ENCODE measurements at regions of chr3 and their contacts with region 1.

Region 1: DNA sequence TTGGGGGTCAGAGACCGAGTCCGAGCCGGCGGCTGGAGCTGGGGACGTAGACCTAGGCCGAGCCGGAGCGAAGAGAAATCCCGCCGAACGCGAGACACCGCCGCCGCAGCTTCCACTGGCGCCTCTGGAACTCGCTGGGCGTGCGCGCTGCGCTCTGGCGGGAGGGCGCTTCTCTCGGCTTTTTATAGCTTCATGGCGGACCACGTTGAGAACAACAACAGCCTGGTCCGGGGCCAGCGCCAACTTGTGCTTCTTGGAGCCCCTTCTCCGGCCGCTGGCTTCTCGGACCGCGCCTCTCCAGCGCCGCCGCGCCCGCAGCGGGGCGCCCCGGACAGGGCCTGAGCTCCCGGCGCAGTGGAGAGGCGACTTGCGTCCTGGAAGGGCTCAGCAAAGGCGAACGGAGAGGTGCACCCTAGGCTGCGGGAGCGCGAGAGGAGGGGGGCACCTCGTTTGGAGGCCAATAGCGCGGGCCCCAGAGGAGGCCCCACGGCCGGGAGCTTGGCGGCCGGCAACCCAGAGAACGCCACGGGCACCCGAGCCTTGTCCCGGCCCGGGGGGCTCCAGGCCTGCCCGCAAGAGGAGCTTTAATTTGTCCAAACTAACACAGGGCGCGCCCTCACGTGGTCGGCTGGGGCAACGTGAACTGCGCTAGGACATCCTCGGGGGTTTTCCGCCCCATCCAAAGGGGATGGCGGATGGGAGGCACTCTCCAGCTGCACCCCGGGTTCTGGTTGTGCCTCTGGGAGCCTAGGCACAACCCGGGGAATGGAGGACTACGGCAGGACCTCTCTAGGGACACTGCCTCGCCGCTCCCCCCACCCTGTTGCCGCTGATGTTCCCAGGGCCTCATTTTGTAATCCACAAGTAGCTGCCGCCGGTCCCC is 37.7 kb downstream of the HMCES start:
- DNase-seq: peak; percentile 82 to 94 (median 91)
- ATAC-seq: peak; percentile 41
- H3K4me3 ChIP-seq: peak overlapping the region; percentile 92
- H3K4me3 Mint-ChIP-seq: peak overlapping the region; percentile 96
- H3K27ac ChIP-seq: peak overlapping the region; percentile 15 to 67
- H3K27ac Mint-ChIP-seq: peak overlapping the region; percentile 82
- H3K4me1 ChIP-seq: peaks cover 32% of the 10 kb centered on the region
- H3K4me1 Mint-ChIP-seq: peaks cover 28% of the 10 kb centered on the region
- H3K27me3 ChIP-seq: no peaks in the 10 kb centered on the region
- H3K27me3 Mint-ChIP-seq: no peaks in the 10 kb centered on the region
- CTCF ChIP-seq: peak; percentile 80

Region 2: DNA sequence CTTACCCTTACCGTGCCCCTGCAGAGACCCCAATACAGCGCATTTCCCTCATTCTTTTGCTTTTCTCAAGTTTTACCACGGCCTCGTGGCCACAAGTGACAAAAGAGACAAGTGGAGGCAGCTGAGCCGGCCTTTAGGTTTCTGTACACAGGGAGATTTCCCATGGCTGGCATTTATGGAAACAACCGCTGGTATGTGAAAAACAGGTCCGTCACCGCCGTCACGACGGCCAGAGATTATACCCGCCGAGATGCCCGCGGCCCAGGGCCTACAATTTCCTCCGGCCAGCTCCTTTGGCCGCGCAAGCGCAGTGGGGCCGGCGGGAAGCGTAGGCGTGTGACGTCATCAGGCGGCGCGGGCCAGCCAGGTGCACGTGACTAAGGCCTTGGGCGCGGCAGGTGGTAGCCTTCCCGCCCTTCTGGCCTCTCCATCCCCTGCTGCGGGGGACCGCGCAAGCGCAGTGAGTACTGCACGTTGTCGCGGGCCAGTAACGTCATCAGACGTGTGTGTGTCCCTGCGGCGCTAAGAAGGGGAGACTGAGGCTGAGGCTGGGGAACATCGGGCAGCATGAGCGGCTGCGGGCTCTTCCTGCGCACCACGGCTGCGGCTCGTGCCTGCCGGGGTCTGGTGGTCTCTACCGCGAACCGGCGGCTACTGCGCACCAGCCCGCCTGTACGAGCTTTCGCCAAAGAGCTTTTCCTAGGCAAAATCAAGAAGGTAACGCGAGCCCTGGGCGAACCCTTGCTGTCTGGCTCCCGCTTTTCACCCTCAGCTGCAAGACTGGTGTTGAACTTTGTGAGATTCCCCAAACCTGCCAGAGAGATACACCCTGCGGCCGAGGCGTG is 437.0 kb before region 1 on chr3 and contains the start of gene ACAD9:
- CTCF ChIA-PET with region 1: no interaction called
- POLR2A ChIA-PET with region 1: interaction called, 13 read pairs
- intact Hi-C with region 1: no loop called
- DNase-seq: peak; percentile 92 to 99 (median 96)
- ATAC-seq: peak; percentile 87
- H3K4me3 ChIP-seq: peak within 1 kb of the TSS; percentile 94
- H3K4me3 Mint-ChIP-seq: peak within 1 kb of the TSS; percentile 88
- H3K27ac ChIP-seq: peak within 1 kb of the TSS; percentile 91 to 99
- H3K27ac Mint-ChIP-seq: peak within 1 kb of the TSS; percentile 92
- H3K4me1 ChIP-seq: peaks cover 56% of the 10 kb centered on the region
- H3K4me1 Mint-ChIP-seq: peaks cover 74% of the 10 kb centered on the region
- H3K27me3 ChIP-seq: no peaks in the 10 kb centered on the region
- H3K27me3 Mint-ChIP-seq: no peaks in the 10 kb centered on the region
- CTCF ChIP-seq: no peak
- total RNA-seq, gene ACAD9: 64.8 to 71.6 TPM

Region 3: DNA sequence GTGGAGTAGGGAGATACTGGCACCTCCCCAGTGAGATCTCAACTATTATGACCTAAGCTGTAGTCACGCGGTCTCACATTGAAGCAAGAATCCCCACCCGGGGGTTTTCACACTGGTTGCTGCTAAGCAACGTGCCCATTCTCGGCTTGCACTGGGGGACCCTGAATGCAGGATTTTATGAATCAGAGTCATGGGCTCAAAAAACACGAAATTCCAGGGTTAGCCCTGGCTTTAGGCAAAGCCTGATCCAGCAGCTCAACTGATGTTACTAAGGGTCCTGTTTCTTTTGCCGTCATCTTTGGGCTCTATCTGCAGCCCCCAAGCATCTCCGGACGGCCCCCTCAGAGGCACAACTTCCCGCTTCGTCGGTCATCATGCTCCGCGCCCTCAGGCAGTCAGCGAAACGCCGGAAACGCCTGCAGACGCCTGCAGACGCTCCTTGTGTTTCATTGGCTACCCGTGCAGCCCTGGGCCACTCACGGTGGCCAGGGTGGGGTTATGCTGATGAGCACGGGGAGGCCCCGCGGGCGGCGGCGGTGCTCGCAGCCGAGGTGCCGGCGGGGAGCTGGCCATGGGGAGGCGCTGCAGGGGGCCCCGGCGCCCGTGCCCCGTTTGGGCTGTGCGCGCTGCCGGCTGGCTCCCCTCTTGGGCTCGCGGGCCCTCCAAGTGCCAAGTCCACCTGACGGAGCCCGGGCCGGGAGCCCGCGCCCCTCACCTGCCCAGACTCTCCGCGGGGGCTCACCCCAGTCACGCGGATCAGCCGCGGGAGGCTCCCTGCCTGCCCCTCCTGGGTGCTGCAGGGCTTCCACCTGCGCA is 289.4 kb before region 1 on chr3:
- CTCF ChIA-PET with region 1: interaction called, 4 read pairs
- POLR2A ChIA-PET with region 1: interaction called, 17 read pairs
- intact Hi-C with region 1: no loop called
- DNase-seq: peak; percentile 85 to 97 (median 90)
- ATAC-seq: peak; percentile 99
- H3K4me3 ChIP-seq: peak overlapping the region; percentile 54
- H3K4me3 Mint-ChIP-seq: peak overlapping the region; percentile 78
- H3K27ac ChIP-seq: peak overlapping the region; percentile 71 to 83
- H3K27ac Mint-ChIP-seq: peak overlapping the region; percentile 95
- H3K4me1 ChIP-seq: peaks cover 22% of the 10 kb centered on the region
- H3K4me1 Mint-ChIP-seq: peaks cover 18% of the 10 kb centered on the region
- H3K27me3 ChIP-seq: no peaks in the 10 kb centered on the region
- H3K27me3 Mint-ChIP-seq: no peaks in the 10 kb centered on the region
- CTCF ChIP-seq: peak; percentile 82

Region 4: GRCh38 chr3:129249276-129250065 is 66.9 kb before region 1 on chr3 and contains the start of gene COPG1:
- CTCF ChIA-PET with region 1: interaction called, 10 read pairs
- POLR2A ChIA-PET with region 1: interaction called, 21 read pairs
- intact Hi-C with region 1: loop called in 1 of 2 experiments (anchors 2 kb)
- DNase-seq: peak; percentile 72 to 94 (median 86)
- ATAC-seq: peak; percentile 85
- H3K4me3 ChIP-seq: peak within 1 kb of the TSS; percentile 100
- H3K4me3 Mint-ChIP-seq: peak within 1 kb of the TSS; percentile 98
- H3K27ac ChIP-seq: peak within 1 kb of the TSS; percentile 79 to 88
- H3K27ac Mint-ChIP-seq: peak within 1 kb of the TSS; percentile 97
- H3K4me1 ChIP-seq: peaks cover 47% of the 10 kb centered on the region
- H3K4me1 Mint-ChIP-seq: peaks cover 55% of the 10 kb centered on the region
- H3K27me3 ChIP-seq: no peaks in the 10 kb centered on the region
- H3K27me3 Mint-ChIP-seq: no peaks in the 10 kb centered on the region
- CTCF ChIP-seq: no peak
- total RNA-seq, gene COPG1: 77.7 to 79.3 TPM

Region 5: GRCh38 chr3:129278439-129278970 is 37.9 kb before region 1 on chr3 and contains the start of gene HMCES:
- CTCF ChIA-PET with region 1: interaction called, 21 read pairs
- POLR2A ChIA-PET with region 1: interaction called, 121 read pairs
- intact Hi-C with region 1: loop called (anchors 1 to 2 kb)
- DNase-seq: peak; percentile 91 to 98 (median 95)
- ATAC-seq: peak; percentile 92
- H3K4me3 ChIP-seq: peak within 1 kb of the TSS; percentile 79
- H3K4me3 Mint-ChIP-seq: peak within 1 kb of the TSS; percentile 97
- H3K27ac ChIP-seq: peak within 1 kb of the TSS; percentile 90 to 93
- H3K27ac Mint-ChIP-seq: peak within 1 kb of the TSS; percentile 95
- H3K4me1 ChIP-seq: peaks cover 45% of the 10 kb centered on the region
- H3K4me1 Mint-ChIP-seq: peaks cover 43% of the 10 kb centered on the region
- H3K27me3 ChIP-seq: no peaks in the 10 kb centered on the region
- H3K27me3 Mint-ChIP-seq: no peaks in the 10 kb centered on the region
- CTCF ChIP-seq: no peak
- total RNA-seq, gene HMCES: 63.5 to 64.0 TPM

Region 6: GRCh38 chr3:129399145-129399894 is 82.9 kb after region 1 on chr3:
- CTCF ChIA-PET with region 1: interaction called, 3 read pairs
- POLR2A ChIA-PET with region 1: interaction called, 16 read pairs
- intact Hi-C with region 1: loop called in 1 of 2 experiments (anchors 5 kb)
- DNase-seq: peak; percentile 49 to 94 (median 61)
- ATAC-seq: peak; percentile 82
- H3K4me3 ChIP-seq: peak overlapping the region; percentile 82
- H3K4me3 Mint-ChIP-seq: peak overlapping the region; percentile 91
- H3K27ac ChIP-seq: peak overlapping the region; percentile 68 to 97
- H3K27ac Mint-ChIP-seq: peak overlapping the region; percentile 94
- H3K4me1 ChIP-seq: peaks cover 27% of the 10 kb centered on the region
- H3K4me1 Mint-ChIP-seq: peaks cover 38% of the 10 kb centered on the region
- H3K27me3 ChIP-seq: no peaks in the 10 kb centered on the region
- H3K27me3 Mint-ChIP-seq: no peaks in the 10 kb centered on the region
- CTCF ChIP-seq: peak; percentile 97

Region 7: DNA sequence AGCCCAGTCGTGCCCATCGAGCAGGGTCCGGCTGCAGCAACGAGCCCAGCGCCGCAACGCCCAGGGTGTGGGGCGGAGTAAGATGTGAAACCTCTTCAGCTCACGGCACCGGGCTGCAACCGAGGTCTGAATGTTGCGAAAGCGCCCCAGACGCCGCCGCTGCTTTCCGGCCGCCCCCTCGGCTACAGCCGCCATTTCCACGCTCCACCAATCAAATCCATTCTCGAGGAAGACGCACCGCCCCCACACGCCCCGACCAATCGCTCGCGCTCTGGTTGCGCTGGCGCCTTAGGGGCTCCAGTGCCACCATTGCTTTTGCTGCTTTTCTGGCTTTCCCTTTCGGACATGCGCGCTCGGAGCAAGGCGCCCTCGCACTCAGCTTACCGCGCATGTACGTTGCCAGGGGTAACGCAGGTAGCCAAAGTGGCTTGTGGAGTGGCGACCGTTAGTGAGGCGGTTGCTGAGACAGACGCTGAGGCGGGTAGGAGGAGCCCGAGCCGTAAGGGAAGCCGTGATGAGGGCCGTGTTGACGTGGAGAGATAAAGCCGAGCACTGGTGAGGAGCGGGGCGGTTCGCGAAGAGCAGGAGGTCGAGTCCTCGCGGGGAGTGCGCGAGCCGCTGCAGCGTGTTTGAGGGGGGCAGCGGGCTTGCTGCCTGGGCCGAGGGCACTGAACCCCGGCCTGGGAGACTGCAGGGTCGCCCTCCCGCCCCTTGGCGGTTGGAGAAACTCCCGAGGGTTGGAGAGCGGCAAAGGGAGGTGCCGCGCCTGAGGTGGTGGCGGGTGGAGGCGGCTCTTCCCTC is 123.6 kb after region 1 on chr3 and contains the starts of genes IFT122 and MBD4:
- CTCF ChIA-PET with region 1: no interaction called
- POLR2A ChIA-PET with region 1: interaction called, 31 read pairs
- intact Hi-C with region 1: no loop called
- DNase-seq: peak; percentile 97 to 100 (median 98)
- ATAC-seq: peak; percentile 81
- H3K4me3 ChIP-seq: peak within 1 kb of the TSS; percentile 91
- H3K4me3 Mint-ChIP-seq: peak within 1 kb of the TSS; percentile 91
- H3K27ac ChIP-seq: peak within 1 kb of the TSS; percentile 83 to 87
- H3K27ac Mint-ChIP-seq: peak within 1 kb of the TSS; percentile 93
- H3K4me1 ChIP-seq: peaks cover 30% of the 10 kb centered on the region
- H3K4me1 Mint-ChIP-seq: peaks cover 86% of the 10 kb centered on the region
- H3K27me3 ChIP-seq: no peaks in the 10 kb centered on the region
- H3K27me3 Mint-ChIP-seq: no peaks in the 10 kb centered on the region
- CTCF ChIP-seq: no peak
- total RNA-seq, gene IFT122: 22.7 to 26.7 TPM
- total RNA-seq, gene MBD4: 62.0 to 63.9 TPM

Measured in CD4-positive, alpha-beta T cell (primary cell).